Activated CD4-positive, alpha-beta T cell treated with anti-CD3 and anti-CD28 coated beads for 36 hours (primary cell): ENCODE measurements at regions of chr19 and their contacts with region 1.

Region 1: DNA sequence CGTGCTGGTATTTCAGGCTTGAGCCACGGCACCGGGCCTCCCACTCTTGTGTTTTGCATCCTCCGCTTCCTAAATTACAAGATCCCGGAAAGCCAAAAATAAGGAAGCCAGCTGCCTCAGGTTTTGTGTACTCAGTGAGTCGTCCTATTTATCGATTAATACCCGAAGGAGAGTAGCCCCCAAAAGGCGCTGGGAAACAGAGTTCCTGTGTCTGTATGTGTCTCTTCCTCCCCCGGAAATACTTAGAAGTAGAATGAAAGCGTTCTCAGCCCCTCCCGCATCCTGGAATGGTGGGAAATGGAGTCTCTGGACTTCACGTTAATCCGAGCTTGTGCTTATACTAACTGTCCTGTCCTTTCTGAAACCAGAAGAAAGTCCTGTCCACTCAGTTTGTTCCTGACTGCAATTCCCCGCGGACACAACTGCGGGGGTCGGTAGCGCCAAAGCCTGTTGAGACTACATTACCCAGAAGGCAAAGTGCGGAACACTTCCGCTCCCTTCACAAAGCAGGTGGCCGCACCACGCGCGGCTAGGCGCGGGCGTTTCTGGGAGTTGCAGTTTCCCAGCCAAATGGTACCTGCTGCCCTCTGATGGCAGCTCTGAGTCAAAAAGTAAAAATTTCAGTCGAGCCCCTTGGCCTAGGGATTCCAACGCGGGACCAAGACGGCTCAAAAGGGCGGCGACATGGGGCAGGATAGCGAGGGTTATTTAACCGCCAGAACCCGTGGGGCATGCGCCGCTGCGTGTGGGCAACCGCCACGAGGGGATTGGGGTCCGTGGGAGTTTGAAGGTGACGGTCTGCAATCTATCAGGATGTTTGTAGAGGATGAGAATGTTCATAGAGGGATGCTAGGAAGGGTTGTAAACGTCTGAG is 2.2 kb upstream of the GSK3A start:
- DNase-seq: peak; percentile 96
- ATAC-seq: peak; percentile 49
- H3K4me3 Mint-ChIP-seq: peak overlapping the region; percentile 93
- H3K27ac Mint-ChIP-seq: peak overlapping the region; percentile 94
- H3K4me1 Mint-ChIP-seq: peaks cover 42% of the 10 kb centered on the region
- H3K27me3 Mint-ChIP-seq: no peaks in the 10 kb centered on the region

Region 2: GRCh38 chr19:42121656-42122069 is 122.9 kb before region 1 on chr19:
- CTCF ChIA-PET with region 1: no interaction called
- POLR2A ChIA-PET with region 1: no interaction called
- intact Hi-C with region 1: loop called in 1 of 2 experiments (anchors 2 kb)
- DNase-seq: peak; percentile 93
- ATAC-seq: peak; percentile 81
- H3K4me3 Mint-ChIP-seq: peak overlapping the region; percentile 80
- H3K27ac Mint-ChIP-seq: peak overlapping the region; percentile 94
- H3K4me1 Mint-ChIP-seq: peaks cover 57% of the 10 kb centered on the region
- H3K27me3 Mint-ChIP-seq: no peaks in the 10 kb centered on the region

Region 3: DNA sequence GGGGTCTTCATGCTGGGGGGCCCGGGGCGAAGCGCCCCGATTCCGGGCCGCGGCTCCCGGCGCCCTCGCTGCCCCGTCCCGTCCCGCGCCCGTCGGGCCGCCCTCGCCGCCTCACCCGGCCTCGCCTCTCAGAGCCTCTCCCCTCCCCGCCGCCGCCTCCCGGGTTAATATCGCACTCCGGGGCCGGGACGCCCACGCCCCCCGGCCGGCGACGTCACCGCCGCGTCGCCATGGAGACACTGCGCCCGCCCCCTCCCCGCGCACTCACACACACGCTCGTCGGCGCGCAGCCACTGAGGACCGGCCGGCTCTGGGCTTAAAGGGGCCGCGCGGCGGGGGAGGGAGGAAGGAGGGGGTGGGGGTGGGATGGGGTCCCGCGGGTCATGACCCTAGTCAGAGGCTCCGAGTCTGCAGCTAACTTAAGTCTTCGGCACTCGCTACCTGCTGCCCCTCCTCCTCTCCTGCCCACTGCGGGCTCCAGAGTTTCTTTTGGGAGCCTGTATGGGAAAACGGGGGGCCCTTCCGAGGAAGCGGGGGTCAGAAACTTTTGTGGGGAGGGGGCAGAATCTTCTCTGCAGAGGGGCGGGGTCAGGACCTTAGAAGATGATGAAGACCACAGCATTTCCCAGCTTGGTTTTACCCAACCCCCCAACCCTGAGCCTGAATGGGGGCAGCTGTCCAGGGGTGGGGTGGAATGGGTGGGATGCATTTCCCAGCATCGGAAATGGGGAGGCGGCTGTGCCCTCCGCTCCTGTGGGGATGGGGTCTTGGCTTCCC is 10.6 kb after region 1 on chr19 and contains the start of gene ERF:
- CTCF ChIA-PET with region 1: interaction called, 3 read pairs
- POLR2A ChIA-PET with region 1: interaction called, 4 read pairs
- intact Hi-C with region 1: loop called (anchors 1 kb)
- DNase-seq: peak; percentile 97
- ATAC-seq: peak; percentile 73
- H3K4me3 Mint-ChIP-seq: peak within 1 kb of the TSS; percentile 70
- H3K27ac Mint-ChIP-seq: peak within 1 kb of the TSS; percentile 63
- H3K4me1 Mint-ChIP-seq: peaks cover 25% of the 10 kb centered on the region
- H3K27me3 Mint-ChIP-seq: peaks cover 3% of the 10 kb centered on the region
- total RNA-seq, gene ERF: 65.5 to 66.4 TPM

Region 4: DNA sequence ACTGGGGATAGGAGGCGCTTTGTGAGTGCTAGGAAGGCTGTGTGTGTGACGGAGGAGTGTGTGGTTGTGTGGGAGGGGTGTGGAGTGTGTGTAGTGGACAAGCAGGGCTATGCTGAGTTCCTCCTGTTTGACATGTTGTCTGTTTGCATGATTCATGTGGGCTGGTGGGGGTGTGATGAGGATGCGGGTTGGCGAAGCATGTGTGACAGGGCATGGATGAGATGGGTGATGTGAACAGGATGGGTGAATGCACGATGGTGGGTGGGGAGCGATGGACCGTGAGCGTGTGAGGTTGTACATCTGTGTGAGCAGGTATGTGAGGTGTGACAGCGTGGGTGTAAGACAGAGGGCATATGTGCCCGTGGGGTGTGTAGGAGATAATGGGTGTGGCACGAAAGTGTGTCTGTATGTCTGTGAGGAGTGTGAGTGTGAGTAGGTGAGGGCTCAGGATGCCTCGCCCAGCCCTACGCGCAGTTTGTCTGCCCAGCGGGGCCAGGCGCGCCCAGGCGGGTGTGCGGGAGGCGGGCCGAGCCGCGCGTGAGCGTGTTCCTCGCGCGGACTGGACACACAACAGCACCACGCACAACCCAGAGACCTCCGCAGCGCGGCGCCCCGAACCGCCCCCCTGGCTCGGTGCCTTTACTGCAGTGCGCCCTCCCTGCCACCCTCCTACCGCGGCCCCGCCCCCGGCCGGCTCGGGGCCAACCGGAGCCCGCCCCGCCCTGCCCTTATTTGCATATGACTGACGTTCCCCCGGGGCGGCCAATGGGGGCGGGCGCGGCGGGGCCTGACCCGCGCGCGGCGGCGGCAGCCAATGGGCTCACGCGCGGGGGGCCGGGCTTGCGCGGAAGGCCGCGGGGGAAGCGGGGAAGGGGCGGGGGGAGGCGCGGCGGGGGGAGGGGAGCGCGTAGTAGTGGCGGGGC is 38.8 kb after region 1 on chr19:
- CTCF ChIA-PET with region 1: interaction called, 50 read pairs
- POLR2A ChIA-PET with region 1: interaction called, 10 read pairs
- intact Hi-C with region 1: loop called (anchors 1 kb)
- DNase-seq: peak; percentile 98
- ATAC-seq: peak; percentile 62
- H3K4me3 Mint-ChIP-seq: no peak overlapping the region
- H3K27ac Mint-ChIP-seq: no peak overlapping the region
- H3K4me1 Mint-ChIP-seq: peaks cover 41% of the 10 kb centered on the region
- H3K27me3 Mint-ChIP-seq: no peaks in the 10 kb centered on the region

Region 5: DNA sequence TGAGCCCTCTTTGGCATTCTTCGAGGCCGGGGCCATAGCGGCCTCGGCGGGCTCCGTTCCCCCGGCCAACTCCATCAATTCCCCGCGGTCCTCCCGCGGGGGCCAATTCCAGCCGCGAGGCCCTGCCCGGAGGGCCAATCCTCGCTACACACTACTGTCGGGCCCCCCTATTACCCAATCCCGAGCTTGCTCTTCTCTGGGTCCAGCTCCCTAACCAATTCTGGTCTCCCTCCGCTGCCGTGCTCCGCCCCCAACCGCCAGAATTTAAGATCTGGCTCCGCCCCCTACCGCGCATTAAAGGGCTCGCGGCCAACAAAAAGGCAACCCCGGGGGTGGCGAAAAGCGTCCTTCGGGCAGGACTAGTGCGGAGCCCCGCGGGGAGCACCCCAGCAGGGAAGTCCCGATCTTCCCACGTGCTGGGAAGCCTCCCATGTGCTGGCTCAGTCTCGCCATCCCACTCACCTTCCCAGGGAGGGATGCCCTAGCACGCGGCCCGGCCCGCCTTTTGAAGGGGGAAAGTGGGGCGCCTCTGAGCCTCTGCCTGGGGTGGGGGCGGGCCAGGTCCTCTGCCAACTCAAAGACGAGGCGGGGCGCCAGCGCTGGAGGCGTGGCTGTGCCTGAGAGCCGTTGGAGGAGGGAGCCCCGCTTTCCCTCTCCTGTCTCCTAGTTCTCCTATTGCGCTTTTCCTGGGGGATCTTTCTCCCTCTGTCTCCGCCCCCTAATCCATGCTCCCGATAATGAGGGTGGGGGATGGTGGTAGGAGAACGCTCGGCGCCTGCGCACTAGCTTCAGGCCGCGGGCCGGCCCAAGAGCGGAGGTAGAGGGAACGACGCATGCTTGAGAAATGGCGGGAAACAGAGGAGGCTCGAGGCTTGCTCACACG is 179.1 kb after region 1 on chr19:
- CTCF ChIA-PET with region 1: no interaction called
- POLR2A ChIA-PET with region 1: no interaction called
- intact Hi-C with region 1: loop called in 1 of 2 experiments (anchors 1 kb)
- DNase-seq: peak; percentile 96
- ATAC-seq: peak; percentile 91
- H3K4me3 Mint-ChIP-seq: peak overlapping the region; percentile 86
- H3K27ac Mint-ChIP-seq: peak overlapping the region; percentile 92
- H3K4me1 Mint-ChIP-seq: peaks cover 40% of the 10 kb centered on the region
- H3K27me3 Mint-ChIP-seq: no peaks in the 10 kb centered on the region